Activated B cell treated with CpG ODN at 0.5 μM for 24 hours (primary cell): ENCODE measurements at regions of chr2 and their contacts with region 1.

Region 1: DNA sequence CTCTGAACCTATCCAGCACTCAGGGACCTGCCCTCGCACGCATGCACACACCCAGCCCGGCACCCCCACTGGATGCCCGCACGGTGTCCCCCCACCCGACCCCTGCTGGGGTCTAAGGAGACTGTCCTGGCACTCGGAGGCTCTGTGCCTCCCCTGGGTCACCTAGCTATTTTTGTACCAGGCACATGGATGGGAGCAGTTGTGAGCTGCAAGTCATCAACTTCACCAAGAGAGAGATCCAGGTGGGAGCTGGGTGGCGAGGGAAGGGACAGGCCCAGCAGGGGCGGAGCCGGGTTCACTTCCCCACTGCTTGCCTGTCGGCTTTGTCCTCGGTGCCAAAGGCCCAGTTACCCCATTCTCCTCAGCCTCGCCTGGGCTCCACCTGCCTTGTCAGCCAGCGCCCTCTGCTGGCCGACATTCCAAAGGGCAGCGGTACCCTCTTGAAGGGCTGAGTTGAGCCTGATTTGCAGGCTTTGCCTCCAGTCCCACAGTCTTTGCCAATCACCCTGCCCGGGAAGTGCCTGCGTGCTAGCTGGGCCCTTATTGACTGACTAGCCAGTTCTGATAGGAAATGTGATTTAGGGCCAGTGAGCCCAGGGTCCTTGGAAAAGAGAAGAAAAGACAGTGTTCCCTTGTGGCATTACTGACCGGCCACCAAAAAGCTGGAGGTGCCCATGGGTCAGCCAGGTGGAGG is 5.8 kb downstream of the NT5DC4 start:
- DNase-seq: peak; percentile 83
- ATAC-seq: peak; percentile 91
- H3K4me3 Mint-ChIP-seq: peak overlapping the region; percentile 32
- H3K27ac Mint-ChIP-seq: peak overlapping the region; percentile 66
- H3K4me1 Mint-ChIP-seq: peaks cover 20% of the 10 kb centered on the region
- H3K27me3 Mint-ChIP-seq: no peaks in the 10 kb centered on the region
- CTCF ChIP-seq: peak; percentile 75

Region 2: DNA sequence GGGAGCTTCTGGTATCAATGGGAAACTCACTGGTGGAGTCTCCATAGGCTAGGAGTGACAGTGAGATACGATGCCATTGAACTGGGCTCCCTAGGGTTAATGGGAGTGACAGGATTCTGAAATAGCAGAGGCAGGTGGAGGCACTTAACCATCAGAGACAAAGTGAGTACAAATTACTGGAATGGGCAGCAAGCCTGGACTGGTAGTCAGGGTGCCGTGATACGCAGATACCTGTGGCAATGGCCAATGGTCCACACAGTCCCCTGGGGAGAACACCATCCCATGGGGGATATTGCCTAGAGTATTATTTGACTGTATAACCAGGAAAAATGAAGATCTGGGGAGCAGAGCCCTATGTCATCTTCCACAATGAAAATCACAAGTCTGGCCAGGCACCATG is 124.9 kb before region 1 on chr2:
- CTCF ChIA-PET with region 1: interaction called, 50 read pairs
- POLR2A ChIA-PET with region 1: interaction called, 3 read pairs
- intact Hi-C with region 1: loop called (anchors 1 kb)
- DNase-seq: no peak
- ATAC-seq: no peak
- H3K4me3 Mint-ChIP-seq: no peak overlapping the region
- H3K27ac Mint-ChIP-seq: no peak overlapping the region
- H3K4me1 Mint-ChIP-seq: peaks cover 6% of the 10 kb centered on the region
- H3K27me3 Mint-ChIP-seq: no peaks in the 10 kb centered on the region
- CTCF ChIP-seq: no peak

Region 3: GRCh38 chr2:112692496-112692911 is 34.1 kb before region 1 on chr2:
- CTCF ChIA-PET with region 1: interaction called, 47 read pairs
- POLR2A ChIA-PET with region 1: interaction called, 3 read pairs
- intact Hi-C with region 1: loop called (anchors 1 kb)
- DNase-seq: no peak
- ATAC-seq: peak; percentile 43
- H3K4me3 Mint-ChIP-seq: no peak overlapping the region
- H3K27ac Mint-ChIP-seq: peak overlapping the region; percentile 37
- H3K4me1 Mint-ChIP-seq: peaks cover 17% of the 10 kb centered on the region
- H3K27me3 Mint-ChIP-seq: no peaks in the 10 kb centered on the region
- CTCF ChIP-seq: no peak

Region 4: DNA sequence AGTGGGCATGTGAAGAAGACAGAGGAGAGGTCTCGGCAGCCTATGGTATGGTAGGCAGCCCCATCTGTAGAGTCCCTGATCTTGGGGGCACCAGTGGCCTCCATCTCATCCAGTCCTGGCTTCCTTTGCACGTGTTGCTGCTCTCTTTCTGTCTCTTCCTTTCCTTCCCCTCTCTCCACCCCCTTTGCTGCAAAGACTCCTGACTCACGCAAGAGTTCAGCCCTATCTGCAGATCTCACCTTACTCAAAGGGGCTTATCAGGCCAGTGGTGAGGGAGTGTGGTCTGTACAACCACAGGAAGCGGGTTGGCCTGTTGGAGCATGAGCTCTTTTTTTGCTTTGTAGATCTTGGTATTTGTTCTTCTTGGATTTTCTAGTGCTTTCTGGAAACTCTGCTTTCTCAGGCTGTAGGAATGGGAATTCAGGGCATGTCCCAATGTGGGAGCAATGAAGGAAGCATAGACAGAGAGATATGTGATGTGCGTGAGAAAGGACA is 20.4 kb before region 1 on chr2:
- CTCF ChIA-PET with region 1: interaction called, 49 read pairs
- POLR2A ChIA-PET with region 1: interaction called, 25 read pairs
- intact Hi-C with region 1: loop called (anchors 1 kb)
- DNase-seq: no peak
- ATAC-seq: peak; percentile 56
- H3K4me3 Mint-ChIP-seq: peak overlapping the region; percentile 58
- H3K27ac Mint-ChIP-seq: peak overlapping the region; percentile 85
- H3K4me1 Mint-ChIP-seq: peaks cover 85% of the 10 kb centered on the region
- H3K27me3 Mint-ChIP-seq: no peaks in the 10 kb centered on the region
- CTCF ChIP-seq: no peak

Region 5: GRCh38 chr2:112764071-112765044 is 37.7 kb after region 1 on chr2 and contains the start of gene CKAP2L:
- CTCF ChIA-PET with region 1: no interaction called
- POLR2A ChIA-PET with region 1: no interaction called
- intact Hi-C with region 1: no loop called
- DNase-seq: peak; percentile 87
- ATAC-seq: peak; percentile 100
- H3K4me3 Mint-ChIP-seq: peak within 1 kb of the TSS; percentile 91
- H3K27ac Mint-ChIP-seq: peak within 1 kb of the TSS; percentile 50
- H3K4me1 Mint-ChIP-seq: peaks cover 31% of the 10 kb centered on the region
- H3K27me3 Mint-ChIP-seq: no peaks in the 10 kb centered on the region
- CTCF ChIP-seq: no peak
- total RNA-seq, gene CKAP2L: 1.2 TPM in 2 replicates

Region 6: DNA sequence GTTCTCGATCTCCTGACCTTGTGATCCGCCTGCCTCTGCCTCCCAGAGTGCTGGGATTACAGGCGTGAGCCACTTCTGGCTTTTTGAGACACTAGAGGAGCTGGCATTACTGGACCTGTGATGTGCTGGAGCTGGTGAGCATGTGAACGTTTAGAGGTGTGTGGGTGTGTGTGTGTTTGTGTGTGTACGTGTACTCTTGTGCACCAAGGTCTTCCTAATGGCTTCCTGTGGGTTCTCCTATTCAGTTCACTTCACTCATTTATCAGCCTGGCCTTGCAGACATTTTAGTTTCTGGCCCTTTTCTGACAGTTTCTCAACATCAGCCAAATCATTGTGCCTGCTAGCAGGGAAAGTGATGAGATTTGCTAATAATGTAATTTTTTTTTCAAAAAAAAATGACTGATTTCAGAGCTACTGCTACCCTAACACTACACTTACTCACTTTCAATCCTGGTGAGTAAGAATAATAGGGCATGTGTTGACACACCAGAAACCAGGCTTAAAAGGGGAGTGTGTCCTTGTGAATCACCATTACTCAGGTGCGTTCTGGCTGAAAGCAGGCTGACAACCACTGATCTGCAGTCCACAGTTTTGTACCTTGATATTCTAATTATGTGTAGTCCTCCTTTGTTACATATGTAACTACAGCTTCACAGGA is 1122.2 kb after region 1 on chr2:
- CTCF ChIA-PET with region 1: no interaction called
- POLR2A ChIA-PET with region 1: no interaction called
- intact Hi-C with region 1: no loop called
- DNase-seq: no peak
- ATAC-seq: no peak
- H3K4me3 Mint-ChIP-seq: no peak overlapping the region
- H3K27ac Mint-ChIP-seq: no peak overlapping the region
- H3K4me1 Mint-ChIP-seq: peaks cover 13% of the 10 kb centered on the region
- H3K27me3 Mint-ChIP-seq: no peaks in the 10 kb centered on the region
- CTCF ChIP-seq: no peak